HCT116 (cell line): ENCODE measurements at regions of chr13 and their contacts with region 1.

Region 1: DNA sequence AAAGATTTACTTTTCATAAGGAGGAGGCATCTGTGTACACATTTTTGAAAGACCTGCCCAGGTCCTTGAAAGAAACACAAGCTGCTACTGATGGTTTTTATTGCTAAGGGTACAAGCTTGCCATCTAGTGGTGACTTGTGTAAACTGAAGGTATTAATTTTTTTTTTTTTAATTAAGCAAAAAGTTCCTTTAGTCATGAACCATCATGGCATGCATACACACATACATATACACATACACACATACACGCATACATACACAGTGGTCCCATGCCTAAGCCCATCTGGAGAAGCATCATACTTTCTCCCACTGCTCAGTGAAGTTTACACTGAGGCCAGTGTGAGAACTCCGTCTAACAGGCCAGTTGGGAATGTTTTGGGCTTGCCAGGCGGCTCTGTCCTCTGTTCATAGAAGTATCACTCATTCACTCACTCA is 312.5 kb downstream of the DCLK1 start:
- DNase-seq: peak; percentile 26
- ATAC-seq: peak; percentile 64
- H3K4me3 ChIP-seq: no peak overlapping the region
- H3K27ac ChIP-seq: no peak overlapping the region
- H3K4me1 ChIP-seq: no peaks in the 10 kb centered on the region
- H3K27me3 ChIP-seq: peaks cover 10% of the 10 kb centered on the region
- CTCF ChIP-seq: peak; percentile 11 to 65 (median 57); a peak in 5 of 6 replicates
- POLR2A ChIP-seq: no peak
- RAD21 ChIP-seq: peak; percentile 38

Region 2: DNA sequence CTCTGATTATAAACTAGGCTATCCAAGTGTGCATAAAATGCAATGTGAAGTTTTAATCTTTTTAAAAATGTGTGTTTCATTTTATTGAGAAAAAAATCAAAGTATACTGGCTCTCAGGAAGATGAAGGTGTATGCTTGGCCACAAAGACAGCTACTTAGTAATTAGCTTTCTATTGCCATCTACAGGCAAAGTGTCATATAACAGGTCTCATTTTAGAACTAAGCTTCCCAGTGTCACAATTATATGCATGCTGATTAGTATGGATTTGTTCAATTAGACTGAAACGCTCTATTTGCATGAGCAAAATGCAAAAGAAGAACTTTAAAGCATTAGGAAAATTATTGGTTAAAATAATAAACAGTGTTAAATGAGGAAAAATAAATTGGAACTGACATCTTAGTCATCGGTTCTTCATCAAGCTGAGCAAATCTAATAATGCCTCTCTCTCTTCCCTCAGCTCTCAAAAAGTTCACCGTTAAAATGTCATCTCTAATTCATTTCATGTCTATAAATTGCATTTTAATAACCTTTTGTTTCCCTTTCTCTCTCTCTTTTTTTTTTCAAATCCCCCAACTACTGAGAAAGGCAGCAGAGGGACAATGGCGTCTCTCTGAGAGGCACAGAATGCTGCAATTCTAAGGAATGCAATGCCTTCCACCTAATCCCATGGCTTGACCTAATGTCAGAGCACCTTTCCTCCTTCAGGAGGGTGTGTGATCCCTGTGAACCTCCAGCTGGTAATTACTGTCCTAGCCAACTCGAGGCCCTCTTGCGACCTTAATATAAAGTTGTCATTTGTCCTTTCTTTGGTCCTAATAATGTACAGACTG is 29.1 kb before region 1 on chr13:
- CTCF ChIA-PET with region 1: interaction called, 17 read pairs
- POLR2A ChIA-PET with region 1: no interaction called
- RAD21 ChIA-PET with region 1: no interaction called
- intact Hi-C with region 1: no loop called
- DNase-seq: peak; percentile 7
- ATAC-seq: peak; percentile 75
- H3K4me3 ChIP-seq: no peak overlapping the region
- H3K27ac ChIP-seq: no peak overlapping the region
- H3K4me1 ChIP-seq: no peaks in the 10 kb centered on the region
- H3K27me3 ChIP-seq: peaks cover 33% of the 10 kb centered on the region; the same call in 1 of the 2 replicates
- CTCF ChIP-seq: peak in 2 of 3 experiments; percentile 44 to 56; a peak in 3 of 6 replicates
- POLR2A ChIP-seq: no peak
- RAD21 ChIP-seq: peak; percentile 37